CD4-positive, alpha-beta T cell (primary cell): ENCODE measurements at regions of chr1 and their contacts with region 1.

Region 1: DNA sequence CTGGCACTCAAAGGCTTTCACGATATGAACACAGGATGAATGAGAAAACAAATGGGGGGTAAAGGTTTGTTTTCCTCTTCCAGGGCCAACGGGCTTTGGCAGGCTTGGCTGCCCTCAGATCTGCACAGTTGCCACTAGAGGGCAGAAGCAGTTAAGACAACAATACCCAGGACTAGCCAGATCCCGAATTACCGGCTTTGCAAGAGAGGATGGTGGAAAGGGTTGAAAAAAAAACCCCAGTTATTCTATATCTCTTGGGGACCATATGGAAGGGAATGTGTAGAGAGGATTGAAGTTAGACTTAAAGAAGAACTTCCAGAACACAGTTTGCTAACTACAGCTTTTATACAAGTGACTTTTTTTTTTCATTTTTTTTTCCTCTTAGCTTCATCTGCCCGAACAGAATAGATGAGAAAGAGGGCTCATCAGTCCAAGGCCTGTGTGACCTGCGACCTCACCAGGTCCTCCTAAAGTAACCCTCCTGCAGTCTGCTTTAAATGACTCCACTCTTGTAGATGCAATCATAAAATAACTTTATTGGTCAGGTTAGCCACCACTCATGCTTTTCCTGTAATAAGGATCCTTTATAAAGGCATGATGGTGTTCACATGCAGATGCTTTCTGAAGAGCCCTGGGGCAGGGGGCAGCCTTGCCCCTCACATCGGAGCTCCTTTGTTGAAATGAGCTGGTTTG is 10.7 kb downstream of the FMOD start:
- DNase-seq: peak; percentile 36 to 83 (median 44)
- ATAC-seq: peak; percentile 63
- H3K4me3 ChIP-seq: no peak overlapping the region
- H3K4me3 Mint-ChIP-seq: no peak overlapping the region
- H3K27ac ChIP-seq: no peak overlapping the region
- H3K27ac Mint-ChIP-seq: no peak overlapping the region
- H3K4me1 ChIP-seq: peaks cover 35% of the 10 kb centered on the region
- H3K4me1 Mint-ChIP-seq: peaks cover 43% of the 10 kb centered on the region
- H3K27me3 ChIP-seq: peaks cover 0 to 11% of the 10 kb centered on the region in 2 experiments
- H3K27me3 Mint-ChIP-seq: peaks cover 13% of the 10 kb centered on the region
- CTCF ChIP-seq: peak; percentile 93

Region 2: GRCh38 chr1:202571347-202572339 is 768.6 kb before region 1 on chr1:
- CTCF ChIA-PET with region 1: no interaction called
- POLR2A ChIA-PET with region 1: no interaction called
- intact Hi-C with region 1: no loop called
- DNase-seq: peak in 4 of 14 experiments; percentile 3 to 47 (median 40)
- ATAC-seq: no peak
- H3K4me3 ChIP-seq: no peak overlapping the region
- H3K4me3 Mint-ChIP-seq: no peak overlapping the region
- H3K27ac ChIP-seq: no peak overlapping the region
- H3K27ac Mint-ChIP-seq: no peak overlapping the region
- H3K4me1 ChIP-seq: no peaks in the 10 kb centered on the region
- H3K4me1 Mint-ChIP-seq: no peaks in the 10 kb centered on the region
- H3K27me3 ChIP-seq: no peaks in the 10 kb centered on the region
- H3K27me3 Mint-ChIP-seq: no peaks in the 10 kb centered on the region
- CTCF ChIP-seq: peak; percentile 27

Region 3: DNA sequence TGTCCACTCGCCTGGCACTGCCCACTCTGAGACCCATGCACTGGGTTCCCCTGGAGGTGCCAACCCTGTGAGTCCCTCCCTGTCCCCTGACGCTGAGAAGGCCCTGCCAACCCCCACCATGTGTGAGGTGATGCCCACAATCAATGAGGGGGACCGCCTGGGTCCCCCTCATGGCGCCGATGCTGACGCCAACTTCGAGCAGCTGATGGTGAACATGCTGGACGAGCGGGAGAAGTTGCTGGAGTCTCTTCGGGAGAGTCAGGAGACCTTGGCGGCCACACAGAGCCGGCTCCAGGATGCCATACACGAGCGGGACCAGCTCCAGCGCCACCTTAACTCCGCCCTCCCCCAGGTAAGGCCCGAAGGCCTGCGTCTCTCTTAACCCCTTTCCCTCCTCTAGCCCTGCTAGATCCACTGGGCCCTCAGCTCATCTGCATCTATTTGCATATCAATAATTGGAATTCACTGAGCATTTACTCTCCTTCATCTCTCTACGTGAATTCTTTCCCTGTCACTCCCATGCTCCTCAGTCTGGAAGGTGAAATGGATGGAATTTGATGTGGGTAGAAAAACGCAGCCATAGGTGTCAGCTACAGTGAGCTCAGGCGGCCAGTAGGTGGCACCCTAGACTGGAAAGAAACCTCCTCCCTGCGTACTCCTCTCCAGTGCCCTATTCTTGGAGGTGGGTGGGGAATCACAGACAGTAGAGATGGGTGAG is 301.2 kb before region 1 on chr1:
- CTCF ChIA-PET with region 1: no interaction called
- POLR2A ChIA-PET with region 1: no interaction called
- intact Hi-C with region 1: loop called in 1 of 2 experiments (anchors 5 kb)
- DNase-seq: peak; percentile 39 to 80 (median 53)
- ATAC-seq: peak; percentile 94
- H3K4me3 ChIP-seq: no peak overlapping the region
- H3K4me3 Mint-ChIP-seq: no peak overlapping the region
- H3K27ac ChIP-seq: no peak overlapping the region
- H3K27ac Mint-ChIP-seq: no peak overlapping the region
- H3K4me1 ChIP-seq: no peaks in the 10 kb centered on the region
- H3K4me1 Mint-ChIP-seq: no peaks in the 10 kb centered on the region
- H3K27me3 ChIP-seq: peaks cover 4 to 6% of the 10 kb centered on the region in 2 experiments
- H3K27me3 Mint-ChIP-seq: peaks cover 6% of the 10 kb centered on the region
- CTCF ChIP-seq: peak; percentile 81

Region 4: DNA sequence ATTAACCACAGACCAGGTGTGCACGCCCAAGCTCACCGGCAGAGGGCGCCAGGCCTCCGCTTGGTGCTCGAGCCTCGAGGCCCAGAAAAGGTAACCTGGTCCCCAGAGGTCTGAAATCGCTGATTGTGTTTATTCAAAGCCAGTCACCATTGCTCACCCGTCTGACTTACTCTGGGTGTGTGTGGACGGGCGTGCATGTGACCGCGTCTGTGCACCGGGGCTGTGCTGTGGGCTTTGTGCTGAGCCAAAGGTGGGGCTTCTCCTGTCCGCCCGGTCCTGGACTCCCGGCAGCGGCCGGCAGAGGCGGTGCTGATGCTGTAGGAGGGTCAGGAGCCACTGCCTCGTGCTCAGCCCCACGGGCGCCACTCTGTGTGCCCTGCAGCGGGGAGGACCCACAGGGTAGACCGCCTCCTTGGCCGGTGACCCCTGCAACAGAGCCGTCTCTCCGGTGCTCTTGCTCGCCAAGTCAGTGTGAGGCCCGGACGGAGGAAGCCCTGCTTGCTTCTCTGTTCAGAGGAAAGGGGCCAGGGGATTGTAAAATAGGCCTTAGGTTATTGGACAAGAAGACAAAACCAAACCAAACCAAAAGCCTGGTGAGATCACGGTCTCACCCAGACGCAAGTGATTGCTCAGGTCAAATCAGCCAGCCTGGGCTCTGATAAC is 66.9 kb before region 1 on chr1:
- CTCF ChIA-PET with region 1: interaction called, 462 read pairs
- POLR2A ChIA-PET with region 1: interaction called, 21 read pairs
- intact Hi-C with region 1: loop called (anchors 1 kb)
- DNase-seq: peak; percentile 86 to 97 (median 92)
- ATAC-seq: peak; percentile 53
- H3K4me3 ChIP-seq: peak overlapping the region; percentile 49
- H3K4me3 Mint-ChIP-seq: peak overlapping the region; percentile 55
- H3K27ac ChIP-seq: peak overlapping the region; percentile 33 to 73
- H3K27ac Mint-ChIP-seq: peak overlapping the region; percentile 85
- H3K4me1 ChIP-seq: peaks cover 75% of the 10 kb centered on the region
- H3K4me1 Mint-ChIP-seq: peaks cover 63% of the 10 kb centered on the region
- H3K27me3 ChIP-seq: no peaks in the 10 kb centered on the region
- H3K27me3 Mint-ChIP-seq: no peaks in the 10 kb centered on the region
- CTCF ChIP-seq: peak; percentile 97

Region 5: GRCh38 chr1:203304919-203305808 is 35.1 kb before region 1 on chr1 and contains the start of gene BTG2:
- CTCF ChIA-PET with region 1: interaction called, 60 read pairs
- POLR2A ChIA-PET with region 1: interaction called, 63 read pairs
- intact Hi-C with region 1: loop called (anchors 1 kb)
- DNase-seq: peak; percentile 84 to 97 (median 90)
- ATAC-seq: peak; percentile 78
- H3K4me3 ChIP-seq: peak within 1 kb of the TSS; percentile 73
- H3K4me3 Mint-ChIP-seq: peak within 1 kb of the TSS; percentile 95
- H3K27ac ChIP-seq: peak within 1 kb of the TSS; percentile 97 to 98
- H3K27ac Mint-ChIP-seq: peak within 1 kb of the TSS; percentile 98
- H3K4me1 ChIP-seq: peaks cover 54% of the 10 kb centered on the region
- H3K4me1 Mint-ChIP-seq: peaks cover 71% of the 10 kb centered on the region
- H3K27me3 ChIP-seq: no peaks in the 10 kb centered on the region
- H3K27me3 Mint-ChIP-seq: no peaks in the 10 kb centered on the region
- CTCF ChIP-seq: no peak
- total RNA-seq, gene BTG2: 802 to 849 TPM

Region 6: GRCh38 chr1:203326830-203327683 is 13.2 kb before region 1 on chr1:
- CTCF ChIA-PET with region 1: interaction called, 62 read pairs
- POLR2A ChIA-PET with region 1: interaction called, 57 read pairs
- intact Hi-C with region 1: loop called in 1 of 2 experiments (anchors 1 kb)
- DNase-seq: peak; percentile 89 to 97 (median 94)
- ATAC-seq: peak; percentile 65
- H3K4me3 ChIP-seq: peak overlapping the region; percentile 66
- H3K4me3 Mint-ChIP-seq: peak overlapping the region; percentile 81
- H3K27ac ChIP-seq: peak overlapping the region; percentile 98 to 99
- H3K27ac Mint-ChIP-seq: peak overlapping the region; percentile 92
- H3K4me1 ChIP-seq: peaks cover 67% of the 10 kb centered on the region
- H3K4me1 Mint-ChIP-seq: peaks cover 72% of the 10 kb centered on the region
- H3K27me3 ChIP-seq: no peaks in the 10 kb centered on the region
- H3K27me3 Mint-ChIP-seq: no peaks in the 10 kb centered on the region
- CTCF ChIP-seq: no peak

Region 7: GRCh38 chr1:203702130-203702577 is 361.9 kb after region 1 on chr1:
- CTCF ChIA-PET with region 1: no interaction called
- POLR2A ChIA-PET with region 1: no interaction called
- intact Hi-C with region 1: loop called (anchors 2 to 5 kb)
- DNase-seq: peak; percentile 42 to 83 (median 62)
- ATAC-seq: peak; percentile 74
- H3K4me3 ChIP-seq: no peak overlapping the region
- H3K4me3 Mint-ChIP-seq: no peak overlapping the region
- H3K27ac ChIP-seq: no peak overlapping the region
- H3K27ac Mint-ChIP-seq: peak overlapping the region; percentile 24
- H3K4me1 ChIP-seq: no peaks in the 10 kb centered on the region
- H3K4me1 Mint-ChIP-seq: peaks cover 15% of the 10 kb centered on the region
- H3K27me3 ChIP-seq: no peaks in the 10 kb centered on the region
- H3K27me3 Mint-ChIP-seq: no peaks in the 10 kb centered on the region
- CTCF ChIP-seq: peak; percentile 91

Region 8: GRCh38 chr1:204128964-204129896 is 789.0 kb after region 1 on chr1:
- CTCF ChIA-PET with region 1: no interaction called
- POLR2A ChIA-PET with region 1: no interaction called
- intact Hi-C with region 1: loop called (anchors 5 to 10 kb)
- DNase-seq: peak; percentile 27 to 85 (median 42)
- ATAC-seq: peak; percentile 87
- H3K4me3 ChIP-seq: no peak overlapping the region
- H3K4me3 Mint-ChIP-seq: no peak overlapping the region
- H3K27ac ChIP-seq: no peak overlapping the region
- H3K27ac Mint-ChIP-seq: no peak overlapping the region
- H3K4me1 ChIP-seq: peaks cover 11% of the 10 kb centered on the region
- H3K4me1 Mint-ChIP-seq: peaks cover 9% of the 10 kb centered on the region
- H3K27me3 ChIP-seq: no peaks in the 10 kb centered on the region
- H3K27me3 Mint-ChIP-seq: no peaks in the 10 kb centered on the region
- CTCF ChIP-seq: peak; percentile 87

Region 9: DNA sequence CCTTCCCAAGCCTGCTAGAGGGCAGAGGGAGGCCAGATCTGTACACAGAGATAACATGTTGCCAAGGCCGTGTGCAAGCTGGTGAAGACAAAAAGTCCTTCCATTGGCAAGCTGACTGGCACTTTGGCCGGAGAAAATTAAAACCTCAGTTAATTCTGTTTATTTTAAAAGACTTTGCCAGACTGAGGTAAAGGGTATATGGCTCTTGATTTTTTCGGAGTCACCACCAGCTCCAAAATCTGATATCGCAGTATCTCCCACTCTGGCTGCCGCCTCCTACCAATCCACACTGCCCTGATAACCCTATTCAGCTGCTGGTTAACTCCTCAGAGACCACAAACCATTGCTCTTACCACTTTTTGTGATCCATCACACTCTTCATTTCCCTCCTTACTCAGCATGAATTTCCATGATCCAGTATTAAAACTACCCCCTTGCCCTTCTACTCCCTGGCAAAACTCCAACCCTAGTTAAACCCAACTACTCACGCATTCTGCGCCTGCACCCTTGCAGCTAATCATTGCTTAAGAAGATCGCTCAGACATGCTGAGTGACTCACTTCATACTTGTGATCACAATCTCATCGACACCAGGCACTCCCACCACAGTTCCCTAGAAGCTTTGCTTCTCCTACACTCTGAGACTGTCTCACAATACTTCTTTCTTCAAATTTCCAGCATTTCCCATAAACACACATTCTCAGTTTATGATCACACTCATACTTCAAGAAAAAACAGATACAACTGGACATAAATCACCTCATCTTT is 1077.2 kb after region 1 on chr1:
- CTCF ChIA-PET with region 1: no interaction called
- POLR2A ChIA-PET with region 1: no interaction called
- intact Hi-C with region 1: no loop called
- DNase-seq: peak in 3 of 14 experiments; percentile 6 to 74 (median 57)
- ATAC-seq: peak; percentile 39
- H3K4me3 ChIP-seq: no peak overlapping the region
- H3K4me3 Mint-ChIP-seq: peak overlapping the region; percentile 27
- H3K27ac ChIP-seq: no peak overlapping the region
- H3K27ac Mint-ChIP-seq: peak overlapping the region; percentile 7
- H3K4me1 ChIP-seq: peaks cover 3% of the 10 kb centered on the region
- H3K4me1 Mint-ChIP-seq: peaks cover 6% of the 10 kb centered on the region
- H3K27me3 ChIP-seq: no peaks in the 10 kb centered on the region
- H3K27me3 Mint-ChIP-seq: no peaks in the 10 kb centered on the region
- CTCF ChIP-seq: no peak